ENCODE measurements at regions of chr10 and their contacts with region 1.

Region 1: GRCh38 chr10:124388823-124389612 is 29.7 kb downstream of the OAT start:
- DNase-seq: peak; percentile 90
- H3K4me3 Mint-ChIP-seq: no peak overlapping the region
- H3K27ac Mint-ChIP-seq: no peak overlapping the region
- H3K4me1 Mint-ChIP-seq: no peaks in the 10 kb centered on the region
- H3K27me3 Mint-ChIP-seq: no peaks in the 10 kb centered on the region

Region 2: GRCh38 chr10:123582084-123582989 is 806.7 kb before region 1 on chr10:
- CTCF ChIA-PET with region 1: interaction called, 5 read pairs
- intact Hi-C with region 1: loop called (anchors 1 kb)
- DNase-seq: peak; percentile 82
- H3K4me3 Mint-ChIP-seq: no peak overlapping the region
- H3K27ac Mint-ChIP-seq: no peak overlapping the region
- H3K4me1 Mint-ChIP-seq: no peaks in the 10 kb centered on the region
- H3K27me3 Mint-ChIP-seq: peaks cover 40% of the 10 kb centered on the region

Region 3: DNA sequence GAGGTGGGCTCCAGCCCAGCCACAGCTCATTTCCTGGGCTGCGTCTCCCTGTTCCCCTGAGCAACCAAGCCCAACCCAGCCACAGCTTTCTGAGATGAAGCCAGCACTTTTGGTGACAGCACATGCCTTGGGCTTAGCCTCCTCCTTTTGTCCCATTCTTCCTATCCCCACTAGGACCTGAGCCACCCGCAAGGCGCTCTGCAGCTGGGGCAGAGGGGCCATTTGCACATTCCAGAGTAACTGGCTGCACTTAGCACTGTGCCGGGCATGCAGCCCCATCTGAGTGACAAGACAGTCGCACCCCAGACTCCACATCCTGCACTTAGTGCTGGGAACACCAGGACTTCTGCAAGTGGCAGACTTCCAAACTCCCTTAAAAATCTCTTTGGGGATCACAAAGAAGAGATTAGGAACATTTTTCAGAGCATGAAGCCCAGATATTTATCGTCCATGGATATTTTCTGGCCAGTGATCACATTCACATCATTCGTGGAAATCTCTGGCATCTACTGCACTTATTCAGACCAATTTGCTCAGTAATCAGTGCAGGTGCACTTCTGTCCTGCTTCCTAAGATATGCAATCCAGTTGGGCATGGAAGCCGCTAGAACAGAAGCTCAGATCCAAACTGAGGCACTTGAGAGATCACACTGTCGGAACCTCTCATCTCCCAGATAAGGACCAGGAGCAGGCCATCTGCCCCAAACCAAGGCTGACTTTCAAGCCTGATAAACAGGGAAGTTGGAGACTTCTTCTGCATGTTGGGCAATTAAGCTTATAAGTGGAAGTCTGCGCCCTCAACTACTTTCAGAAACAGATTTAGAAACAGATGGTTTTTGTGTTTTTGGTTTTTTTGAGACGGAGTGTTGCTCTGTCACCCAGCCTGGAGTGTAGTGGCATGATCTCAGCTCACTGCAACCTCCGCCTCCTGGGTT is 322.0 kb before region 1 on chr10:
- CTCF ChIA-PET with region 1: no interaction called
- intact Hi-C with region 1: no loop called
- DNase-seq: no peak
- H3K4me3 Mint-ChIP-seq: no peak overlapping the region
- H3K27ac Mint-ChIP-seq: no peak overlapping the region
- H3K4me1 Mint-ChIP-seq: peaks cover 30% of the 10 kb centered on the region
- H3K27me3 Mint-ChIP-seq: peaks cover 2% of the 10 kb centered on the region

Region 4: DNA sequence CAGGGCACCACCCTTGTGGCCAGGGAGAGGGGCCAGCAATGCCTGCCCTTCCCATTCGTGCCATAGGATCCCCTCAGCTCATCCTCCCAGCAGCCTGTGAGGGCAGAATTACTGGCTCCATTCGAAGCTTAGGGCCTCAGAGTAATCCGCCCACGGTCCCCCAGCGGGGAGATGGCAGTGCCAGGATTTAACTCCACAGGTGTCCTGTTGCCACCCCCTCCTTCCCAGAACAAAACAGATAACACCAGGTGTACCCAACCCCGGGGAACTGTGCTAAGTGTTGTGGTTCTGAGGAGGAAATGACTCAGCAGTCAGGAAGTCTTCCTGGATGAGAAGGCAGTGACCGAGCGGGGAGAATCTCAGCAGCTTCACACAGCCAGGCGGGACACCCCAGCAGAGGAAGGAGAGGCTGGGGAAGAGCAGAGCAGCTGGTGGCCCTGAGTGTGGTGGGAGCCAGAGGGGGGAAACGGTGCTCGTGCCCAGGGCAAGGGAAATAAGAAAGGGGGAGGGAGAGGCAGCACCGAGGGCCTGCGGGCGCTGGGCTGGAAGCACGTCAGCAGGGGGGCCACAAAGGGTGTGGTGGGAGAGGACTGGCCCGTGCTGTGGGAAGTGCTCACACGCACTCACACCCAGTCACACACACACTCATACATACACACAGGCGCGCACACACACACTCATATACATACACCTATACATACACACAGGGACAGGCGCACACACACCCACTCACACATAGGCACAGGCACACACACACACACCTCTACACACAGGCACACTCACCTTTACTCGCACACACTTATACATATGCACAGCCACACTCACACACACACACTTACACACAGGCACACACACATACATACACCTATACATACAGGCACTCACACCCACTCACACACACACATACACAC is 235.8 kb before region 1 on chr10:
- CTCF ChIA-PET with region 1: interaction called, 4 read pairs
- intact Hi-C with region 1: loop called (anchors 1 kb)
- DNase-seq: peak; percentile 90
- H3K4me3 Mint-ChIP-seq: no peak overlapping the region
- H3K27ac Mint-ChIP-seq: no peak overlapping the region
- H3K4me1 Mint-ChIP-seq: peaks cover 7% of the 10 kb centered on the region
- H3K27me3 Mint-ChIP-seq: peaks cover 16% of the 10 kb centered on the region

Region 5: GRCh38 chr10:124354411-124355382 is 34.3 kb before region 1 on chr10:
- CTCF ChIA-PET with region 1: interaction called, 5 read pairs
- intact Hi-C with region 1: loop called (anchors 1 kb)
- DNase-seq: peak; percentile 62
- H3K4me3 Mint-ChIP-seq: peak overlapping the region; percentile 75
- H3K27ac Mint-ChIP-seq: peak overlapping the region; percentile 85
- H3K4me1 Mint-ChIP-seq: peaks cover 12% of the 10 kb centered on the region
- H3K27me3 Mint-ChIP-seq: peaks cover 4% of the 10 kb centered on the region

Region 6: GRCh38 chr10:124418726-124419501 is 29.9 kb after region 1 on chr10 and contains the start of gene OAT:
- CTCF ChIA-PET with region 1: interaction called, 4 read pairs
- intact Hi-C with region 1: loop called (anchors 1 kb)
- DNase-seq: peak; percentile 98
- H3K4me3 Mint-ChIP-seq: peak within 1 kb of the TSS; percentile 76
- H3K27ac Mint-ChIP-seq: no peak within 1 kb of the TSS
- H3K4me1 Mint-ChIP-seq: peaks cover 25% of the 10 kb centered on the region
- H3K27me3 Mint-ChIP-seq: no peaks in the 10 kb centered on the region
- total RNA-seq, gene OAT: 37.4 to 41.6 TPM